MCF 10A (cell line): ENCODE measurements at regions of chr12 and their contacts with region 1.

Region 1: DNA sequence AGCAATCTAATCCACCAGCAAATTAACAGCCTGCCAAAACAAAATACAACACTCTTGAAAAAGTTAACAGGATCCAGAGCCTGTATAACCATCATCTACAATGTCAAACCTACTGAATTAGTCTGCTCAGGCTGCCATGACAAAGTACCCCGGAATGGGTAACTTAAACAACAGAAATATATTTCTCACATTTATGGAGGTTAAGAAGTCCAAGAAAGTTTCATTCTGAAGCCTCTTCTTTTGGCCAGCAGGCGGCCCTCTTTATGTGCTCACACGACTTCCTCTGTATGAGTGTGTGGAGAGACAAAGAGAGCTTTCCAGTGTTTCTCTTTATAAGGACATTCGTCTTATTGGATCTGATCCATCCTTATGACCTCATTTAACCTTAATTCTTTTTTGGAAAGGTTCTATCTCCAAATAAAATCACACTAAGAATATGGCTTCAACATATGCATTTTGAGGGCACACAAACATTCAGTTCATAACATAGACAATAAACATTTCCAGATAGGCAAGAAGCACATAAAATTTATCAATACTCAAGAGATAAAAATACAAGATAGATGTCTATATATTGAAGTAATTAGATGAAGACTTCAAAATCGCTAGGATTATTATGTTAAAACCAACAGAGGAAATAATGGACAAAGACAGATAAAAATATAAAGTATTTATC is 5.9 kb upstream of the RERG start:
- DNase-seq: peak; percentile 87
- H3K4me3 Mint-ChIP-seq: no peak overlapping the region
- H3K27ac Mint-ChIP-seq: peak overlapping the region; percentile 59
- H3K4me1 Mint-ChIP-seq: peaks cover 49% of the 10 kb centered on the region
- H3K27me3 Mint-ChIP-seq: no peaks in the 10 kb centered on the region
- CTCF ChIP-seq: peak; percentile 59

Region 2: DNA sequence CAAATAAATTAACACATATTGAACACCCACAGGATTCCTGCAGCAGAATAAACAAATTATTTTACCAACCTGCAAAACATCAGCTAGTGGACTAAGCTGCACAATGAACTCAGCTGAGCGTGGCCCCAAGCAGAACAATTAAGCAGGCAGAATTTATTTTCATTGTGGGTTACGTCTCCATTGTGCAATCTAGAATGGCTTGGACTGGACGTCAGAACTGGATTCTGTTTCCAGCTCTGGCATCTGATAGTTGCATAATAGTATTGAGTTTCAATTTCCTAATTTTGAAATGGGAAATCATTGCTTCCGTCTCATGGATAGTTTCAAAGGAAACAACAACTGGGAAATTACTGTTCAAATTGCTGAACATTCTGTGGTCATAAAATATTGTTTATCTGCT is 29.6 kb after region 1 on chr12:
- CTCF ChIA-PET with region 1: interaction called, 17 read pairs
- POLR2A ChIA-PET with region 1: interaction called, 6 read pairs
- intact Hi-C with region 1: loop called (anchors 2 kb)
- DNase-seq: peak; percentile 94
- H3K4me3 Mint-ChIP-seq: no peak overlapping the region
- H3K27ac Mint-ChIP-seq: peak overlapping the region; percentile 89
- H3K4me1 Mint-ChIP-seq: peaks cover 34% of the 10 kb centered on the region
- H3K27me3 Mint-ChIP-seq: no peaks in the 10 kb centered on the region
- CTCF ChIP-seq: no peak

Region 3: DNA sequence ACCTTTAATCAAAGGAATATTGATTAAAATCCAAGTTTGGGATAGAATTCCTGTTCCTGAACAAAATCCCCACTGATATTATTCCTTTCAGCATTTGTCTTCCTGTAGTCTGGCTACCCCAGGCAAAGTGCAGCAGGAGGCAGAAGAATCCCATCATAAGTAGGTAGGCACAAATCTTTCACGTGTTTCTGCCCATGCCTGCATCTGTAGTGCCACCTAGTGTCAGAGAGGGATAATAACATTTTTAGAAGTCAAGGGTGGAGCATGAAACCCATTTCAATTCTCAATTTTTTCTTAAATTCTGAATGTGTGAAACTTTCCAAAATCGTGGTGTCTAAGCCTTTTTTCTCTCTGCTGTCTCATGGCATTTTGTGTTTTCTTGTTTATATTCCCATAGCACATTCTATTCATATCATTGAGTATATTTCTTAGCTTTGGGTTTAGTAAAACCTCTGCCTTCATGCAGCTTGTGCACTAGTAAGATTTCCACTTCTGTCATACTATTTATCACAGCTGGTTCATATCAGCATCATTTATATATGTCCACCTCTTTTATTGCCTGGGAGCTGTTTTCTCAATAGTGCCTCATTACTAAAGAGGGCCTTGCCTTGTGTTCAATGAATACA is 41.9 kb after region 1 on chr12:
- CTCF ChIA-PET with region 1: interaction called, 109 read pairs
- POLR2A ChIA-PET with region 1: interaction called, 5 read pairs
- intact Hi-C with region 1: loop called (anchors 1 kb)
- DNase-seq: peak; percentile 85
- H3K4me3 Mint-ChIP-seq: no peak overlapping the region
- H3K27ac Mint-ChIP-seq: peak overlapping the region; percentile 70
- H3K4me1 Mint-ChIP-seq: peaks cover 19% of the 10 kb centered on the region
- H3K27me3 Mint-ChIP-seq: no peaks in the 10 kb centered on the region
- CTCF ChIP-seq: peak; percentile 83

Region 4: DNA sequence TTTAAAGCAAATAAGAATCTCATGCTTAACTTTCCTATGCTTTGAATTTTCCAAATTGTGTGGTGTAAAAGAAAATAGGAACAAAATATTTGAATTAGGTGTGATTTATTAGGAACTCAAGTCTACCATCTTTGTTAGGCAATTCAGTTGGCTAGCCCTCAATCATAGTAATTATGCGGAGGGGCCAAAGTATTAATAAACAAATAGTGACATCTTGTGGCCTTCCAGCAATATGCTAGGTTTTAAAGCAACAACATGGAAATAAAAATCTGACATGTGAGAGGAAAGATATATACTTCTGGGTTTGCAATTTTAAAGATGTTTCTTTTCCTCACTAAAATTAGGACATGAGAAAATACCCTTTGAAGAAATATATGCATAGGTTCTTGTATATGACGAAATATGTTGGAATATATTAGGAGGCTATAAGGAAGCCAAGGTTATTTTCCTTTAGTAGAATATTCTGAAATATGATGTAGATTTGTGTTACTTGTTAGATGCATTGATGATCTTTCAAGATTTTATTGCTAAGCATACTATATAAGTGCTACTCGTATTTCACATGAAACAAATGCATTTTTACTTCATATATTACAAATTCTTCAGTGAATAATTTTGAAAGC is 295.5 kb after region 1 on chr12:
- CTCF ChIA-PET with region 1: interaction called, 19 read pairs
- POLR2A ChIA-PET with region 1: interaction called, 5 read pairs
- intact Hi-C with region 1: loop called (anchors 1 kb)
- DNase-seq: peak; percentile 68
- H3K4me3 Mint-ChIP-seq: no peak overlapping the region
- H3K27ac Mint-ChIP-seq: no peak overlapping the region
- H3K4me1 Mint-ChIP-seq: peaks cover 17% of the 10 kb centered on the region
- H3K27me3 Mint-ChIP-seq: no peaks in the 10 kb centered on the region
- CTCF ChIP-seq: peak; percentile 69